ENCODE measurements at regions of chr17 and their contacts with region 1.

Region 1: DNA sequence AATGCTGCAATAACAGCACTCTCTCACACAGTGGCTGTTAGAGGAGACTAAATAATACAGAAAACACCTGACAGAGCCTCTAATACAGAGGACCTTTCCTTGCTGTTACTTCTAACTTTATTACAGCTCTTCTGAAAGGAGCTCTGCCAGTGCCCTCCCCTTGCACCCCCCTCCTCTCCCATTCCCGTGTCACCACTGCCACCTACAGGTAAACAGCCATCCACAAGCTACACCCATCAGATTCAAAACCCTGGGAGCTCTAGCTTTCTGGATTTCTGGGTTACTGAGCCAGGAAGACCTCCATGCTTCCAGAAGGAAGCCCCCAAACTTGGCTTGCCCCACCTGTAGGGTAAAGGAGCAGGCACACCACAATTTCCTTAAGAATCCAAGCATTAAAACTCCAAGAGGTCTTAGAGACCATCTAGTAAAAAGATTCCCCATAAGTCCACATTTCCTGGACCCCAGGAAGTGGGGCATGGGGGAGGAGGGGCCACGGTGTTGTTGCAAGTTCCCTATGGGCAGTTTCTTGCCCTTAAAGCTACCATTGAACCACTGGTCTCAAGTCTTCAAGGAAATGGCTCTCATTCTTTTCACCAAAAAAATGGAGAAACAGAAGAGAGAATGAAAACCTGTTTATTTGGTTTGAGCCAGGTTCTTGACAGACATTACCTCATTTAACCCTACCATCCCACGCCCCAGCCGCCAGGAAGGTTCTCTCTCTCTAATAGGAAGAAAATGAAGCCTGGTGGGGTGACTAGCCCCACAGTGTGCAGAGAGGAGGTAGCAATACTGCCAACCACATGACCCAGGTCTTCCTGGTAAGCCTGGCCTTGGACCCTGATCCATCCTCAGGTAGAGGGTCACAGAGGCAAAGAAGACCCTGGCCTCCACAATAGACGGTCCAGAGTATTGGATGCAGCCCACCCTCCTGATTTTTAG is 52.8 kb downstream of the TOM1L2 start:
- DNase-seq: peak; percentile 86 to 96
- ATAC-seq: peak; percentile 67 to 79
- H3K4me3 ChIP-seq: no peak overlapping the region
- H3K27ac ChIP-seq: peak overlapping the region; percentile 90 to 92
- H3K4me1 ChIP-seq: peaks cover 65% of the 10 kb centered on the region
- CTCF ChIP-seq: peak; percentile 96
- EP300 ChIP-seq: no peak
- POLR2A ChIP-seq: no peak
- RAD21 ChIP-seq: peak; percentile 99

Region 2: DNA sequence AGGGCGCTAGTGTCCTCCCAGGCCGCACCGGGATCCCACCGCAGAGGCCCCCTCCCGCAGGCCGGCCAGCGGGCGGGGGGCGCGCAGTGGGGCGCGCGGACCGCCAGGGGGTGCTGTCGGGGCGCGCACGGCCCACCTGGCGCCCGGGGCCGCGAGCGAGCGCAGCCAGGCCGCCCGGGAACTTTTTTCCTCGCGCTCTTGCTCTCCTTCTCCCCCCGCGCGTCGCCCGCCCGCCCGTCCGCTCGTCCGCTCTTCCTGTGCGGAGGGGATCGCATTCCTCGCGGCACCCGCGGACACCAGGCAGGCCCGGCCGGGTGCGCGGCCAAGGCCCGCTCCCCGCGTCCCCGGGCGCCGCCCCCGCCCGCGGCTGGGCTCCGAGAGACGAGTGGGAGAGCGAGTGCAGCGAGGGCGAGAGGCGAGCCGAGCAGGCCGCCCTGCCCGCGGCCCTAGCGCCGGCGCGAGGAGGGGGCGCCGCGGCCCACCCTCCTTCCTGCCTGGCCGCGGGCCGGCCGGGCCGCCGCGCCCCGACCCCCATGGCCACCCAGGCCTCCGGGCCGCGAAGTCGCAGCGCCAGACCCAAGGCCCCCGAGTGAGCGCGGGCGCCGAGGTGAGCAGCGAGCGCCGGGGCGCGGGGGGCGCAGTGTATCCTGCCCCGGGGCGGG is 238.1 kb before region 1 on chr17 and contains the start of gene RAI1:
- CTCF ChIA-PET with region 1: interaction called, 28 read pairs
- POLR2A ChIA-PET with region 1: interaction called, 3 read pairs
- DNase-seq: peak; percentile 74 to 87
- ATAC-seq: peak; percentile 48 to 53
- H3K4me3 ChIP-seq: peak within 1 kb of the TSS; percentile 77
- H3K27ac ChIP-seq: peak within 1 kb of the TSS; percentile 94 to 97
- H3K4me1 ChIP-seq: peaks cover 35% of the 10 kb centered on the region
- CTCF ChIP-seq: peak; percentile 99
- EP300 ChIP-seq: no peak
- POLR2A ChIP-seq: peak; percentile 20; the same call in 1 of the 2 replicates
- RAD21 ChIP-seq: peak; percentile 59 to 98
- polyA plus RNA-seq, gene RAI1: 3.5 and 7.1 TPM in 2 replicates

Region 3: GRCh38 chr17:17836250-17836817 is 83.1 kb before region 1 on chr17:
- CTCF ChIA-PET with region 1: interaction called, 18 read pairs
- POLR2A ChIA-PET with region 1: interaction called, 20 read pairs
- DNase-seq: peak; percentile 96 to 98
- ATAC-seq: peak; percentile 45 to 62
- H3K4me3 ChIP-seq: peak overlapping the region; percentile 85
- H3K27ac ChIP-seq: peak overlapping the region; percentile 98
- H3K4me1 ChIP-seq: peaks cover 82% of the 10 kb centered on the region
- CTCF ChIP-seq: 0 out of 3 replicates have a peak, but pooled peaks have one; percentile 13
- EP300 ChIP-seq: no peak; a peak in 2 of 5 replicates
- POLR2A ChIP-seq: peak; percentile 89
- RAD21 ChIP-seq: no peak

Region 4: DNA sequence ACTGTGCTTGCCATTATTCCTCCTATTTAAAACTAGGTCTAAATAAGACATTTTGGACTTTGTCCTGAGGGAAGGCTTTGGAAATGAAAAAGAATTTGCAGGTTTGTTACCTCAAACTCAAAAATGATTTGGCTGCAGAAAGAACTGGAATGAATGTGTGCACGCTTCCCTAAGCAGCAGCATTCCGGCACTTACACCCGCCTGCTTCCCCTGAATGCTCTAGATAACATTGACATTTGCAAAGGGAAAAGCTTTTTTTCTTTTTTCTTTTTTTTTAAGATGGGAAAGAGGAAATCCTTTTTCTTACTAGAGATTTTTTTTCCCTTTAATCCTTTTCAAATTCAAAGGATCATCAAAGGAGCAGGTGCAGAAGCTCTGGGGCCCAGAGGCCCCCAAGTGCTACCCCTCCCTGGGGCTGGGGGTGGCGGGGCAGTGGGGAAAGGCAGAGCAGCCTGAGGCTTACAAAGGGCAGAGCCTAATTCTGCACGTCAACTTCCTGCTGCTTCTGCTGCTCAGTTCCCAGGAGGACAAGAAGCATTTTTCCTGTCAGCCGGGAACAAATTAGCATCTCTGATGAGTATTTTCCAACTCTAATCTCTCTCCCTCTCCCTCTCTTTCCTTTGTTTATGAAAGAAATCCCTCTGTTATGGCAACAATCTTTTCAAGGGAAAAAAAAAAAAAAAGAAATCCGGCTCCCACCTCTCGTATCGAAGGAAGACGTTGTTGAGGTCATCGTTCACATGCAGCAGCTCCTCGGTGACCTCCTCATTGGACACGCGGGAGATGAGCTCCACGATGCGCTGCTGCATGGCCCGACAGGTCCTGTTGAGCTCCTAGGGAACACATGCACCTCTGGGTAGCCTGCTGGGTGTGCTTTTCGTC is 50.6 kb before region 1 on chr17:
- CTCF ChIA-PET with region 1: interaction called, 16 read pairs
- POLR2A ChIA-PET with region 1: no interaction called
- DNase-seq: no peak
- ATAC-seq: no peak
- H3K4me3 ChIP-seq: no peak overlapping the region
- H3K27ac ChIP-seq: no peak overlapping the region
- H3K4me1 ChIP-seq: peaks cover 5% of the 10 kb centered on the region; the same call in 1 of the 3 replicates
- CTCF ChIP-seq: no peak
- EP300 ChIP-seq: no peak
- POLR2A ChIP-seq: no peak
- RAD21 ChIP-seq: no peak

Region 5: DNA sequence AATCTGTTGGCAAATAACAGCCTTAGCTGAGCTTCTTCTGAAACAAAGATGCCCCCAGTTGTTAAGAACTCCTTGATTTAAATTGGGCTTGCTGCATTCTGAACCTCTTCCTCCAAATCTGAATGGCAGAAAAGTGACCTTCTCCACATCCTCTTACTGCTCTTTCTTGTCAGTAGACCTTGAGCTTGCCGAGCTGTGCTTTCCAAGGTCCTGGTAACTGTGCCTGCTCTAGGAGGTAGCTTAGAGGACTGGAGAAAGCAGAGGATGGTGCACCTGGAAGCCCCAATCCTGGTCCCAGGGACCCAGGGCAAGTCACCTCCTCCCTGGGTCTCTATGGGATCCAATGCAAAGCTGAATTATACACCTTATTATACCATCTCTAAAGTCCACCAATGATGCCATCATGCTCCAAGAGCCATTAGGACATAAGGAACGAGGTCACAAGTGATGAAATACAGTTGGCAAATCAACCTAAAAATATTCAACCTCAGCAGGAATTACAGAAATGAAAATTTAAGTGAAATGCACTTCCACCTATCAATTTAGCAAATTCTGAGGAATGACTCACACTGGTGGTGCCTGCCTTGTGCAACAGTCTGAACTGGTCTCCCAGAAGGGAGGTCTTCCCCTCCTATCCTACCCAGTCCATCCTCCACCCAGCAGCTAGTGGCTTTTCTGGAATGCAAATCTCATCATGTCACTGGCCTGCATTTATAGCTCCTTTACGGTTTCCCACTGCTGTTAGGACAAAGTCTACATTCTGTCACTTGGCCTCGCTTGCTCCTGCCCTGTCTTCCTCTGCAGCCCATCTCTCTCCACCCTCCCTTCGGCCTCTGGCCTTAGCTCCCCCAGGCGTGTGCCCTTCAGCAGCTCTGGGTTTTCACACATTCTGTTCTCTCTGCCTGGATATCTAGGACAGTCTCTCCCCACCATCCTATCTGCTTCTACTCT is 16.2 kb after region 1 on chr17:
- CTCF ChIA-PET with region 1: interaction called, 11 read pairs
- POLR2A ChIA-PET with region 1: no interaction called
- DNase-seq: peak; percentile 34 to 42
- ATAC-seq: peak; percentile 67 to 80; a peak in 5 of 6 replicates
- H3K4me3 ChIP-seq: no peak overlapping the region
- H3K27ac ChIP-seq: peak overlapping the region; percentile 13 to 71; a peak in 4 of 6 replicates
- H3K4me1 ChIP-seq: peaks cover 37% of the 10 kb centered on the region
- CTCF ChIP-seq: no peak
- EP300 ChIP-seq: no peak
- POLR2A ChIP-seq: no peak
- RAD21 ChIP-seq: no peak

Region 6: GRCh38 chr17:17966399-17966798 is 47.0 kb after region 1 on chr17:
- CTCF ChIA-PET with region 1: interaction called, 15 read pairs
- POLR2A ChIA-PET with region 1: no interaction called
- DNase-seq: no peak
- ATAC-seq: no peak
- H3K4me3 ChIP-seq: no peak overlapping the region
- H3K27ac ChIP-seq: no peak overlapping the region
- H3K4me1 ChIP-seq: peaks cover 19% of the 10 kb centered on the region
- CTCF ChIP-seq: no peak
- EP300 ChIP-seq: no peak
- POLR2A ChIP-seq: no peak
- RAD21 ChIP-seq: no peak

Region 7: DNA sequence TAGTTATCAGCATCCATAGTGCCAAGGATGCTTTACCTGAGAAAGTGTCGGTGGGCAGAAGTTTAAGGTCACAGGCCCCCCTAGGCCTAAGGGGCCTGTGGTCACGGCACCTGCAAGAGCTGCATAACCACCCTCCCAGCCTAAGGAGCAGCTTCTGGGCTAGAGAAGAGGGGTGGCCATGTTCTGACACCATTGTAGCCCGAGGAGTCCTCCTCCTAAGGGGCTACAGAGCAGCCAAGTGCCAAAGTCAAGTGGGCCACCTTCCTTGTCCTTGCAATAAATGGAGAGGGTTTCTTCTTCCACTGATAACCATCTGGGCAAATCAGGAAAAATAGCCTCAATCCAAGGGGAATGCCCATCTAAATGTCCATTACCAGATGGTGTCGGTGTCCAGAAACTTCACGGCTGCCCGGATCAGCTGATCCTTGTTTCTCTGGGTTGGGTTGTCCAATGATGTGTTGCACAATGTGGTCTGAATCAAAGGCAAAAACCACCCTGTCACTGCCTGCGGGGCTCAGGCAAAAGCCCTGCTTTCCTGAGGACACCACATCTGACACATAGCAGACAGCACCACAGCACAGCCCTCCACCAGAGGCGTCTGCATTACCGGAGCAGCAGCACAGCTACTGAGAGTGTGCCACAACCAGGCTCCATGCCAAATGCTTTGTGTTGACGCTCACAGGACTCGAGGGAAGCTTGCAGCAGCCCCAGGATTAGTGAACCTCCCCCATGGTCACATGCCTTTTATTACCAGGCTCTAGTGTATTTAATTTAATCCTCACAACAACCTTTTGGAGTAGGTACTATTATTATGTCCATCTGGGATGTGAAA is 106.7 kb after region 1 on chr17:
- CTCF ChIA-PET with region 1: interaction called, 13 read pairs
- POLR2A ChIA-PET with region 1: interaction called, 5 read pairs
- DNase-seq: no peak
- ATAC-seq: peak in 1 of 2 experiments; percentile 31; a peak in 1 of 6 replicates
- H3K4me3 ChIP-seq: no peak overlapping the region
- H3K27ac ChIP-seq: no peak overlapping the region
- H3K4me1 ChIP-seq: peaks cover 11% of the 10 kb centered on the region; the same call in 2 of the 3 replicates
- CTCF ChIP-seq: no peak
- EP300 ChIP-seq: no peak
- POLR2A ChIP-seq: no peak
- RAD21 ChIP-seq: no peak

Region 8: DNA sequence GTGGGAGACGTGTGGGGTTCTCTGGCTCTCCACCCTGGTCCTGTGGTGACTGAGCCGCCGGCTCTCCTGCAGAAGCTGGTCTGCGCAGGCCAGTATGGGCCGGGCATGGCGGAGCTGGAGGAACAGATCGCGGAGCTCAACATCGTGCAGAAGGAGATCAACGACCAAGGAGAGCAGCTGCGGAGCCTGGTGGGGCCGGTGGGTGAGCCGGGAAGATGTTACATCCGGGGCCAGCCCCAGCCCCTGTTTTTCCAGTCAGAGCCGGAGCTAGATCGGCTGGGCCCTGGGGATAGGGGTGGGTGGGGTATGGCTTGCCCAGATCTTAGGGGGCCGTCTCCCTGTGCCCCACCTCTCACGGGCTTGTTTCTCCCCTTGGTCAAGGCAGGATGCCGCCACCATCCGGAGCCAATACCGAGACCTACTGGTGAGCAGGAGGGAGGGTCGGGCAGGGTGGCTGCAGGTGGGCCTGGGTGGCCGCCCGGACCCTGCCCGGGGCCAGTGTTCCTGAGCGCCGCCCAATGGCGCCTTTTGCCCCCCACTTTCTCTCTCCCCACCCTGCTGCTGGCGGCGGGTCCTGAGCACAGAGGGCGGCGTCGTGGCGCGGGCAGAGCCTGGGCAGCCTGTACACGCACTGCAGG is 463.1 kb after region 1 on chr17:
- CTCF ChIA-PET with region 1: no interaction called
- POLR2A ChIA-PET with region 1: no interaction called
- DNase-seq: no peak
- ATAC-seq: no peak
- H3K4me3 ChIP-seq: no peak overlapping the region
- H3K27ac ChIP-seq: no peak overlapping the region
- H3K4me1 ChIP-seq: peaks cover 7% of the 10 kb centered on the region
- CTCF ChIP-seq: no peak
- EP300 ChIP-seq: no peak
- POLR2A ChIP-seq: no peak
- RAD21 ChIP-seq: no peak

Measured in A549 (cell line).